Endothelial cell of umbilical vein (primary cell): ENCODE measurements at regions of chr2 and their contacts with region 1.

Region 1: DNA sequence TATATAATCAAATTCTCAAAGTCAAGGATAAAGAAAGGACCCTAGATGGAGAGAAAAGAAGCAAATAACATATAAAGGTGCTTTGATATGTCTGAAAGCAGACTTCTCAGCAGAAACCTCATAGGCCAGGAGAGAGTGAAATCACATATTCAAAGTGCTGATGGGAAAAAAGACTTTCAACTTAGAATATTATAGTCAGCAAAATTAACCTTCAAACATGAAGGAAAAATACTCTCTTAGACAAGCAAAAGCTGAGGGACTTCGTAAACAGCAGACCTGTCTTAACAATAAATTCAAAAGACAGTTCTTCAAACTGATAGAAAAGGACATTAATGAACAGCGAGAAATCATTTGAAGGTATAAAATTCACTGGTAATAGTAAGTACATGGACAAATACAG is 107.2 kb upstream of the KCNH7 start:
- DNase-seq: no peak
- H3K4me3 ChIP-seq: no peak overlapping the region
- H3K27ac ChIP-seq: no peak overlapping the region
- H3K4me1 ChIP-seq: no peaks in the 10 kb centered on the region
- H3K27me3 ChIP-seq: no peaks in the 10 kb centered on the region
- CTCF ChIP-seq: no peak
- POLR2A ChIP-seq: no peak

Region 2: DNA sequence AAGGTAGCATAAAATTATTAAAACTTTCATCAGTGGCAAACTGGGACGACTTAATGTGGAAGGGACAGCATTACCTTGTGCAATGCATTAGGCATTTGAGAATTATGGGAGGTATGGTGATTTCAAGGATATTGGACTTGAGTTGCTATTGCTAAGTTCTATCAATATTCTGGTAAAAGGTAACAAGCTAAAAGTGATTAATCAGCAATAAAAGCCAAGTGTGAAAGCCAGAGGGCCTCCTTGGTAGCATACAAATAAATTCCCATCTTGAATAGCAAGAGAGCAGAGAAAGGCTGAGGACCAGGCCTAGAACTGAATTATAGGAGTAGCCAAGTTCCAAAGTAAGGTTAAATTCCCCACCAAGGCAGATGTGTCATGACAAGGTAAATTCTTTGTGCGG is 33.0 kb before region 1 on chr2:
- CTCF ChIA-PET with region 1: no interaction called
- POLR2A ChIA-PET with region 1: no interaction called
- dilution Hi-C with region 1: no loop called
- intact Hi-C with region 1: loop called (anchors 1 kb)
- DNase-seq: no peak
- H3K4me3 ChIP-seq: no peak overlapping the region
- H3K27ac ChIP-seq: no peak overlapping the region
- H3K4me1 ChIP-seq: no peaks in the 10 kb centered on the region
- H3K27me3 ChIP-seq: no peaks in the 10 kb centered on the region
- CTCF ChIP-seq: no peak
- POLR2A ChIP-seq: no peak